A673 (cell line): ENCODE measurements at regions of chr10 and their contacts with region 1.

Region 1: DNA sequence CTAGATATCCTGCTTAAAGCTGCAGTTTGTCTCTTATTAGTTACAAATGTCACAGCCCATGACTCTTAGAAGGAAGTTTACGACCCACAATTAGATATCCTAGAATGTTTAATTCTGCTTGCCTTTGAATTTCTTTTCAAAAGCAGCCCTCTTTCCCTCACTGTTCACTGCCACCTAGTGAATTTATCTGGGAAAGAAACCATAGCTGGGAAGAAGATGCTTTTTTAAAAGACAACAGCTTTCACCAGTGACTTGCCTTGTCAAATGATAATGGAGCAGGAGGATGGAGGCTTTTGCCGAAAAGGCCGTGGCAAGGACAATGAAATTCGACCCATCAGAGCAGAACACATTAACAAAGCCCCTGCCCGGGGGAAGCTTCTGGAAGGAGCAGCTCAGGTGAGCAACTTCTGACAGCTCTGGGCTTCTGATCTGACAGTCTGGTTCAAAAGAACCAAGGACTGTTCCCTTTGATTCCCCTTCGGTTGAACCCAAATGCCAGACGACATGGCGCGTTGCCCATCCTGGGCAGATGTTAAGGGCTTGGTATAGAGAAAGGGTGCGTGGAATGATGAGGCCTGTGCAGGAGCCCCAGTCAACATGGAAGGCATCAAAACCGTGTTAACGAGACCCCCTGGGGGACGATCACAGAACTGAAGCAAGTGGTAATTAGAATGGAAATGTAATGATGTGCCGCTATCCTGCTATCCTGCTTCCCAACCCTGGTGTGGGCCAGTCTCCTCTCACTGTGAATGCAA is 236.8 kb downstream of the FRMD4A start:
- DNase-seq: peak; percentile 25
- H3K4me3 ChIP-seq: no peak overlapping the region
- H3K27ac ChIP-seq: no peak overlapping the region
- H3K4me1 ChIP-seq: no peaks in the 10 kb centered on the region
- H3K27me3 ChIP-seq: no peaks in the 10 kb centered on the region
- CTCF ChIP-seq: peak; percentile 46; the same call in 1 of the 2 replicates

Region 2: GRCh38 chr10:13787015-13787421 is 306.9 kb before region 1 on chr10:
- CTCF ChIA-PET with region 1: interaction called, 3 read pairs
- POLR2A ChIA-PET with region 1: no interaction called
- intact Hi-C with region 1: loop called (anchors 5 kb)
- DNase-seq: peak; percentile 56
- H3K4me3 ChIP-seq: no peak overlapping the region
- H3K27ac ChIP-seq: no peak overlapping the region
- H3K4me1 ChIP-seq: peaks cover 7% of the 10 kb centered on the region
- H3K27me3 ChIP-seq: no peaks in the 10 kb centered on the region
- CTCF ChIP-seq: no peak

Region 3: GRCh38 chr10:14163377-14164086 is 69.6 kb after region 1 on chr10:
- CTCF ChIA-PET with region 1: no interaction called
- POLR2A ChIA-PET with region 1: no interaction called
- intact Hi-C with region 1: no loop called
- DNase-seq: no peak
- H3K4me3 ChIP-seq: no peak overlapping the region
- H3K27ac ChIP-seq: no peak overlapping the region
- H3K4me1 ChIP-seq: no peaks in the 10 kb centered on the region
- H3K27me3 ChIP-seq: peaks cover 53% of the 10 kb centered on the region
- CTCF ChIP-seq: no peak

Region 4: DNA sequence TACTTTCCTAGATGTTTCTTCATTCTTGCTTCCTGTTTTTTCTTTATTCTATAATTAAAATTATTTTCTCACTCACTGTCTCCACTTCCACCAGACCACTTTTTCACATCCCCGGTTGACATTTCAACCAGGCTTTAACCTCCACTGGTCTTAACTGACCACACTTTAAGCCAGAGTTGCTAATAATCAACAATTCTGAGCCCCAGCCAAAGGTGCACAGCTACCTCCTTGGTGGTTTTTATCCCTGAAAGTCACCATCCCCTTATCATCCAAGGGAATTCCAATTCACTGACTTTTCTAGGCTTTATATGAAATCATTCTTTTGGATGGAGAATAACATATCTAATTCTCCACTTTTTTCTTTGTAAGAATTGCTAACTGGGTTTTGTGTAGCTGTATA is 98.0 kb after region 1 on chr10:
- CTCF ChIA-PET with region 1: no interaction called
- POLR2A ChIA-PET with region 1: no interaction called
- intact Hi-C with region 1: no loop called
- DNase-seq: no peak
- H3K4me3 ChIP-seq: no peak overlapping the region
- H3K27ac ChIP-seq: no peak overlapping the region
- H3K4me1 ChIP-seq: no peaks in the 10 kb centered on the region
- H3K27me3 ChIP-seq: peaks cover 8% of the 10 kb centered on the region
- CTCF ChIP-seq: no peak

Region 5: GRCh38 chr10:14532473-14533251 is 438.8 kb after region 1 on chr10:
- CTCF ChIA-PET with region 1: no interaction called
- POLR2A ChIA-PET with region 1: no interaction called
- intact Hi-C with region 1: no loop called
- DNase-seq: no peak
- H3K4me3 ChIP-seq: no peak overlapping the region
- H3K27ac ChIP-seq: no peak overlapping the region
- H3K4me1 ChIP-seq: no peaks in the 10 kb centered on the region
- H3K27me3 ChIP-seq: no peaks in the 10 kb centered on the region
- CTCF ChIP-seq: no peak